Transverse colon (tissue), 4 donors: ENCODE measurements at regions of chr9 and their contacts with region 1.

Region 1: DNA sequence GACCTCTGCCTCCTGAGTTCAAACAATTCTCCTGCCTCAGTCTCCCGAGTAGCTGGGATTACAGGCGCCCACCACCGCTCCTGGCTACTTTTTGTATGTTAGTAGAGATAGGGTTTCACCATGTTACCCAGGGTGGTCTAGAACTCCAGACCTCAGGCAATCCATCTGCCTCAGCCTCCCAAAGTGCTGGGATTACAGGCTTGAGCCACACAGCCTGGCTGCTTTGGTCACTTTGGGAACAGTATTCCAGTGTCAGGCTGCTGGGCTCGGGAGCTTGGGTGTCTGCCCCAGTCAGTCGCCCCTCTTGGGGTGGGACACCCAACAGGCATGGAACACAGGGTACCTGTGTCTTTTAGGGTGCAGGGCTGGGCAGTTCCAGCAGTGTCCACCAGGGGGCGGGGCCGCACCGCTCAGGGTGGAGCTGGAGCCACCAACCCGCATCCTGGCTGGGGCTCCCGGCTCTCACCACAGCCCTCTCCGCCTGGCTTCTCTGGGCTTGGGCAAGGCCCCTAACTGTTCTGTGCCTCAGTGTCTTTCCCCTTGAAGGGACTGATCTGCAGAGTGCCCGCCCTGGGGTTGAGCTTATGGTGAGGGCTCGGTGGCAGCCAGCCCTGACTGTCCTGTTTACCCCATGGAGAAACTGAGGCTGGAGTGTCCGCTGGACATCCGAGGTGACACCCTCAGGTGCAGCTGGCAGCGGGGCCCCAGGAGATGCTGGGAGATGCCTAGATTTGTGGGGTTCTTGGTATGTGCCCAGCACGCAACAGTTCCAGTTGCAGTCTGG is 6.4 kb upstream of the RNU6ATAC start:
- DNase-seq: no peak
- H3K4me3 ChIP-seq: no peak overlapping the region
- H3K27ac ChIP-seq: peak overlapping the region in 2 of 4 donors; percentile 56 to 68
- H3K4me1 ChIP-seq: peaks cover 0 to 27% (median 5%) of the 10 kb centered on the region in 4 donors
- H3K27me3 ChIP-seq: peaks cover 5% of the 10 kb centered on the region
- CTCF ChIP-seq: no peak
- EP300 ChIP-seq: no peak
- POLR2A ChIP-seq: no peak

Region 2: GRCh38 chr9:134443168-134444037 is 272.7 kb after region 1 on chr9:
- in situ Hi-C with region 1: loop called (anchors 5 to 10 kb)
- intact Hi-C with region 1: loop called (anchors 1 kb)
- DNase-seq: peak; percentile 93
- H3K4me3 ChIP-seq: no peak overlapping the region
- H3K27ac ChIP-seq: no peak overlapping the region
- H3K4me1 ChIP-seq: peaks cover 14 to 23% (median 18%) of the 10 kb centered on the region in 4 donors
- H3K27me3 ChIP-seq: peaks cover 11% of the 10 kb centered on the region
- CTCF ChIP-seq: peak; percentile 98 to 99 (median 98)
- EP300 ChIP-seq: no peak
- POLR2A ChIP-seq: no peak